Right ventricle myocardium superior (tissue), 1 donor: ENCODE measurements at regions of chr3 and their contacts with region 1.

Region 1: DNA sequence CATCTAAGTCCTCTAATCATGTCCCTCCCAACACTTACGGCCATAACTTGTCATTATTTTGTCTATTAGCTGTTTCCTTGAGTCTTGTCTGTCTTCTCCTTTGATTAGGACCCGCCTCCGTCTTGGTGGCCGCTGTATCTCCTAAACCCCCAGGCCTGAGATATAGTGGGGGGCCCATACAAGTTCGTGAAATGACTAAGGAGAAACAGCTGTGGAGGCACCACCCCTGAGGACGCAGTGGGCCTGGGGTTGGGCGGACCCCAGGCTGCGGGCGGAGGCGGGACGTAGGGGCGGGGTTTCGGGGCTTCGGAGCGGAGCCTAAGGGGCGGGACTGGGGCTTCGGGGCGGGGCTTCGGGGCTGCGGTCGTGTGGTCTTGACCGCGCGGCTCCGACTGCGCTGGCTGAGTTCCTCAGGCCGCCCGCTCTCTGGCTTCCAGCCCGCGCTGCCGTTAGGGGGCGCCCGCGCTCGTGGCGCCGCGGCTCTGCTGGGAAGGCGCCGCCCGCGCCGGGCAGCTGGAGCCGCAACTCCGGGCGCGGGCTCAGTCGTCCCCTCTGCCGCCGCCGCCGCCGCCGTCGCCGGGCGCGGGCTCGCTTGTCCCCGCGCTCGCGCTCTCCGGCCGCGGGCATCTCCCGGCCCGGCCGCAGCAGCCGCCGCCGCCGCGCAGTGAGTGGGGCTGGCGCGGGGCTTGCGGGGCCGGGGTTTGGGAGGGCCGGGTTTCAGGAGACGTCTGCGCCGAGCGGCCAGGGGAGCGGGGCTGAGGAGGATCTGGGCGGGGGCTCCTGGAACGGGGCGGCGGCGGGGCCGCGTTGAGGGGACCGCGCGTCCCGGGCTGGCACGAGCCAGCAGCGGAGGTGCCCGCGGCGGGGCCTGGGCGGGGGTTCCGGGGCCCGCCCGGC is at the start of gene KCTD6:
- DNase-seq: peak; percentile 96
- ATAC-seq: peak; percentile 97
- total RNA-seq, gene KCTD6: 6.9 TPM

Region 2: GRCh38 chr3:58532794-58533220 is 41.1 kb after region 1 on chr3:
- intact Hi-C with region 1: loop called (anchors 5 kb)
- DNase-seq: peak; percentile 85
- ATAC-seq: peak; percentile 57